Calu3 (cell line): ENCODE measurements at regions of chr14 and their contacts with region 1.

Region 1: DNA sequence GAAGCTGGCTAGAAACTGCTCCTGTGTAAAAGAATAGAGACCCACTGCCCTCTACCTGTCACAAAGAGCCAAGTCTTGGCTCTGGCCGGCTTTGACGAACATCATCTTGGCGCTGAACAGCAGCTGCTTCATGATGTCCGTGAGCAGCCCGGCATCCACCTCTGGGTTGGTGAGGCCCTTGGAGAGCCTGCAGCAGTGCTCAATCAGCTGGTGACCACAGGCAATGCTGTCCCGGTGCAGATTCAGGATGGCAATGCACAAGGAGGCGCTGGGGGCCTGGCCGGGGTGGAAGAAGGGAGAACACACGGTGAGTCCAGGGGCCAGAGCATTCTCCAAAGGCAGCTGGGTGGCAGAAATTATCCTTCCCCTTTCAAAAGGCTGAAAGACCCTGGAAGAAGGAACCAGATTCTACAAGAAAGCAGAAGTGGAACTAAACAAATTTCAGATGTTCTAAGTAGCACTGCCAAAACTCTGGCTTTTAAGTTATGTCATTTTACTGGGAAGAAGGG is 50.2 kb downstream of the ZFYVE26 start:
- DNase-seq: no peak
- H3K4me3 Mint-ChIP-seq: no peak overlapping the region
- H3K27ac Mint-ChIP-seq: no peak overlapping the region
- H3K4me1 Mint-ChIP-seq: peaks cover 25% of the 10 kb centered on the region
- H3K27me3 Mint-ChIP-seq: no peaks in the 10 kb centered on the region
- CTCF ChIP-seq: no peak

Region 2: GRCh38 chr14:67674481-67675169 is 91.6 kb before region 1 on chr14 and contains the start of gene VTI1B:
- CTCF ChIA-PET with region 1: no interaction called
- intact Hi-C with region 1: loop called (anchors 10 kb)
- DNase-seq: peak; percentile 78
- H3K4me3 Mint-ChIP-seq: peak within 1 kb of the TSS; percentile 88
- H3K27ac Mint-ChIP-seq: peak within 1 kb of the TSS; percentile 83
- H3K4me1 Mint-ChIP-seq: peaks cover 28% of the 10 kb centered on the region
- H3K27me3 Mint-ChIP-seq: no peaks in the 10 kb centered on the region
- CTCF ChIP-seq: no peak
- total RNA-seq, gene VTI1B: 70.3 and 75.5 TPM in 2 replicates

Region 3: DNA sequence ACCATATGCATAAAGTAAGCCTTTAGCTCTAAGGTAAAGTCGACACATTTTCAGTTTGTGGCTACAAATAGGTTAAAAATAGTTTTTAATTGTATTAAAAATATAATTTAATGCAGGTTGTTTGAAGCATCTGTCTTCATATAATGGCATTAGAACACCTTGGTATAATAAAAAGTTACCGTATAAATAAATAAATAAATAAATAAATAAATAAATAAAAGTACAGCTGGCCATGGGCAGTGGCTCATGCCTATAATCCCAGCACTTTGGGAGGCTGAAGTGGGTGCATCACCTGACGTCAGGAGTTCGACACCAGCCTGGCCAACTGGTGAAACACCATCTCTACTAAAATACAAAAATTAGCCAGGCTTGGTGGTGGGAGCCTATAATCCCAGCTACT is 34.5 kb after region 1 on chr14:
- CTCF ChIA-PET with region 1: interaction called, 10 read pairs
- intact Hi-C with region 1: no loop called
- DNase-seq: no peak
- H3K4me3 Mint-ChIP-seq: no peak overlapping the region
- H3K27ac Mint-ChIP-seq: no peak overlapping the region
- H3K4me1 Mint-ChIP-seq: no peaks in the 10 kb centered on the region
- H3K27me3 Mint-ChIP-seq: no peaks in the 10 kb centered on the region
- CTCF ChIP-seq: no peak

Region 4: DNA sequence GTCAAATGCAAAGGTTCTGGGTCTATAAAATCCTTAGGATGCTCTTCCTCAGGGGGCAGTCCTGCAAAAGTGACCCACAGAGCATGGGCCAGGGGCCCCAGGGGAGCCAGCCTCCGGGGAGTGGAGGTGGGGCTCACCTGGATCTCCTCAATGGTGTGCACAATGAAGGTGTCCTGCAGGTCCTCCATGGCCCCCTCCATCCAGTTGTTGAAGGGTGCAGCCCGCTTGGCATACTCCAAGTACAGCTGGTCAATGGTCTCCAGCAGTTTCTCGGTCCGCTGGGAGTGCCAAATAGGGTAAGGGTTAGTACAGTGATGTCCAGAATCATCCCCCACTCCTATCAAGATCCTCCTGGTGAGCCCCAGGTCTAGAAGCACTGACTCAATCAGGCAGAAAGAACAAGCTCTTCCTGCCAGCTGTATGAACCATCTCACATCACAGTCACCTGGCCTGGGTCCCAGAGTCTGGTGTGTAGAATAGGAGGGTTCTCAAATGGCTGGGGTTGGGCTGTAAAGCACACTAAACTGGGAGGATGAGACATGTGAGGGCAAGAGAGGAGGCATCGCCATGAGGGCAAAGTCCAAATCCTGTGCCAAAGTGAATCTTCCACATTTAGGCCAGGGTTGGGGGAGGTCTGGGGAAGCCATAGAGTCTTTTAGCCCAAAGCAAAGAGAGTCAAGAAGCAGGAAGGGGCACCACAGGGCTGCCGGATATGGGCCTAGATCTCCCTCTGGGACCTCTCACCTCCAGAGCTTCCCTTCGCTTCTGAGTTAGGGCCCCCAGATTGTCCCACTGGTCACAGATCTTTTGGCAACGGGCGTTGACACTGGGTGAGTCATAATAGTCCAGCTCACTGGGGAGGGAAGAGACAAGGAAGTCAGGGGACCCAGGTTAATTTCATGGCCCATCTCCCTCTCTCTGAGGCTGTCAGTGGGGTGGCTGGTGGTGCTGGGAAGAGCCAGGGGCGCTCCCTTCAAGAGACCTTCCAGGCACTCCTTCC is 1118.1 kb after region 1 on chr14:
- CTCF ChIA-PET with region 1: no interaction called
- intact Hi-C with region 1: no loop called
- DNase-seq: no peak
- H3K4me3 Mint-ChIP-seq: no peak overlapping the region
- H3K27ac Mint-ChIP-seq: peak overlapping the region; percentile 51
- H3K4me1 Mint-ChIP-seq: no peaks in the 10 kb centered on the region
- H3K27me3 Mint-ChIP-seq: no peaks in the 10 kb centered on the region
- CTCF ChIP-seq: no peak